H1 (cell line): ENCODE measurements at regions of chr2 and their contacts with region 1.

Region 1: DNA sequence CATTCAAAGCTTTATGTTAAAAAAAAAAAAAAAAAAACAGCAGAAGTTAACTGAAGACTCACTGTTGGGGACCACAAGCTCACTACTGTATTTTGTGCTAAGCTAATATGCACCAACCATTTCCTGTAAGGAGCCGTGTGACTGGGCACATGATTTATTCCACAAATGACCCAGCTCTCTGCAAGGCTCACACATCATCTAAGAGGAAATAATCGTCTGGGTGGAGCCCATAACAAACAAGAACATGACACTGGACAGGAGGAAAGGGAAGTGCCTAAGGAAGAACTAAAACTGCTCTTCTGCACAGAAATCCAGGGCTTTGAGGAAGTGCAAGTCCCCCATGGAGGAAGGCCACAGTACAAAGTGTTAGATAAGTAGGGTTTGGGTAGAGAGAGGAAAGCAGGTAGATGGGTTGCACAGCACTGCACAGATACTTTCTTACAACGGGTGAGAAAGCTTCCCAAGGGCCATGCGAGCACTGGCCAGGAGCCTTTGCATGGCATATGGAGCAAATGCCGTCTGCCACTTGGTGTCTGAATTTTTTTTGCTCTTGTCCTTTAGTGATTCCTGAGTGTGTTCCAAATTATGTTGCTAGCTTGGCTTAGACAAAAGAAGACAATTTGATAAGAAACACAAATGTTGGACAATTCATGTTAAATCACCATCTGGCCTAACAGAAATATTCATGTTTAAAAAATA is 24.4 kb downstream of the NFE2L2 start:
- DNase-seq: no peak
- H3K4me3 ChIP-seq: no peak overlapping the region
- H3K27ac ChIP-seq: no peak overlapping the region
- H3K4me1 ChIP-seq: peaks cover 0 to 2% (median 0%) of the 10 kb centered on the region in 4 experiments; a peak in 3 of 7 replicates
- H3K27me3 ChIP-seq: no peaks in the 10 kb centered on the region
- CTCF ChIP-seq: no peak
- EP300 ChIP-seq: no peak
- POLR2A ChIP-seq: no peak
- RAD21 ChIP-seq: no peak

Region 2: GRCh38 chr2:176960721-176961120 is 279.4 kb before region 1 on chr2:
- CTCF ChIA-PET with region 1: no interaction called
- POLR2A ChIA-PET with region 1: no interaction called
- DNase-seq: no peak
- H3K4me3 ChIP-seq: no peak overlapping the region
- H3K27ac ChIP-seq: no peak overlapping the region
- H3K4me1 ChIP-seq: peaks cover 0 to 6% (median 0%) of the 10 kb centered on the region in 4 experiments; a peak in 1 of 7 replicates
- H3K27me3 ChIP-seq: no peaks in the 10 kb centered on the region
- CTCF ChIP-seq: no peak
- EP300 ChIP-seq: no peak
- POLR2A ChIP-seq: no peak
- RAD21 ChIP-seq: no peak

Region 3: DNA sequence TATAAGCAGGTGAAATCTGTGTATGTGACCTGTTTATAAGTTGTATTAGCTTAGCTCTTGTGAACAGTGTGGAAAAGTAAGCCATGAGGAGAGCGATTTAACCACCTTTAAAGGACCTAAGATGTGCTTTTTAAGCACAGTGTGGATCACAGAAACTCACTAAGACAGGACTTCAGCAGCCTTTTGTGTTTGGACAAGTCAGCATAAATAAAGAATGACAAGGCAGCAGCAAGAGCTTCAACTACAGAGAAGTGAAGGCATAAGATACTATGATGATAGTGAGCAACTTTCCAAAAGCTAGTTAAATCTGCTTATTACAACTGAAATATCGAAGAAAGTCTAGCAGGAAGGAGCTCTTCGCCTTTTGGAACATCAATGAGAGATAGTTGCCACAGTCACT is 18.5 kb before region 1 on chr2:
- CTCF ChIA-PET with region 1: interaction called, 9 read pairs
- POLR2A ChIA-PET with region 1: interaction called, 56 read pairs
- DNase-seq: no peak
- H3K4me3 ChIP-seq: no peak overlapping the region
- H3K27ac ChIP-seq: no peak overlapping the region
- H3K4me1 ChIP-seq: no peaks in the 10 kb centered on the region
- H3K27me3 ChIP-seq: no peaks in the 10 kb centered on the region
- CTCF ChIP-seq: no peak
- EP300 ChIP-seq: no peak
- POLR2A ChIP-seq: peak; percentile 22 to 42; a peak in 2 of 3 replicates
- RAD21 ChIP-seq: no peak

Region 4: GRCh38 chr2:177229448-177230242 is 10.4 kb before region 1 on chr2:
- CTCF ChIA-PET with region 1: interaction called, 9 read pairs
- POLR2A ChIA-PET with region 1: interaction called, 56 read pairs
- DNase-seq: no peak
- H3K4me3 ChIP-seq: no peak overlapping the region
- H3K27ac ChIP-seq: no peak overlapping the region
- H3K4me1 ChIP-seq: no peaks in the 10 kb centered on the region
- H3K27me3 ChIP-seq: no peaks in the 10 kb centered on the region
- CTCF ChIP-seq: no peak
- EP300 ChIP-seq: no peak
- POLR2A ChIP-seq: no peak
- RAD21 ChIP-seq: no peak